ENCODE measurements at regions of chrX and their contacts with region 1.

Region 1: GRCh38 chrX:69503782-69504625 is at the start of gene NALF2:
- DNase-seq: peak in 1 of 2 experiments; percentile 72
- H3K4me3 ChIP-seq: peak within 1 kb of the TSS; percentile 63 to 94 (median 72)
- H3K27ac ChIP-seq: no peak within 1 kb of the TSS; the same call in 1 of the 2 replicates
- H3K4me1 ChIP-seq: peaks cover 0 to 14% (median 7%) of the 10 kb centered on the region in 4 experiments; a peak in 6 of 7 replicates
- H3K27me3 ChIP-seq: peaks cover 0 to 13% (median 5%) of the 10 kb centered on the region in 4 experiments; a peak in 6 of 7 replicates
- CTCF ChIP-seq: no peak
- EP300 ChIP-seq: no peak
- POLR2A ChIP-seq: no peak; a peak in 1 of 3 replicates
- RAD21 ChIP-seq: no peak
- total RNA-seq, gene NALF2: 15.6 and 16.1 TPM in 2 replicates

Region 2: GRCh38 chrX:69374569-69374968 is 129.4 kb before region 1 on chrX:
- CTCF ChIA-PET with region 1: no interaction called
- POLR2A ChIA-PET with region 1: no interaction called
- DNase-seq: no peak
- H3K4me3 ChIP-seq: no peak overlapping the region
- H3K27ac ChIP-seq: no peak overlapping the region
- H3K4me1 ChIP-seq: no peaks in the 10 kb centered on the region
- H3K27me3 ChIP-seq: no peaks in the 10 kb centered on the region
- CTCF ChIP-seq: no peak
- EP300 ChIP-seq: no peak
- POLR2A ChIP-seq: no peak
- RAD21 ChIP-seq: no peak

Region 3: GRCh38 chrX:69424161-69424560 is 79.8 kb before region 1 on chrX:
- CTCF ChIA-PET with region 1: no interaction called
- POLR2A ChIA-PET with region 1: no interaction called
- DNase-seq: no peak
- H3K4me3 ChIP-seq: no peak overlapping the region
- H3K27ac ChIP-seq: no peak overlapping the region
- H3K4me1 ChIP-seq: no peaks in the 10 kb centered on the region
- H3K27me3 ChIP-seq: no peaks in the 10 kb centered on the region
- CTCF ChIP-seq: peak in 2 of 3 experiments; percentile 11 to 24; a peak in 2 of 4 replicates
- EP300 ChIP-seq: no peak
- POLR2A ChIP-seq: no peak
- RAD21 ChIP-seq: peak; percentile 27 to 31; a peak in 3 of 4 replicates

Region 4: GRCh38 chrX:69493193-69493592 is 10.8 kb before region 1 on chrX:
- CTCF ChIA-PET with region 1: interaction called, 16 read pairs
- POLR2A ChIA-PET with region 1: no interaction called
- DNase-seq: peak in 1 of 2 experiments; percentile 72
- H3K4me3 ChIP-seq: no peak overlapping the region
- H3K27ac ChIP-seq: no peak overlapping the region
- H3K4me1 ChIP-seq: no peaks in the 10 kb centered on the region
- H3K27me3 ChIP-seq: no peaks in the 10 kb centered on the region
- CTCF ChIP-seq: peak in 2 of 3 experiments; percentile 51 to 54; a peak in 3 of 4 replicates
- EP300 ChIP-seq: no peak
- POLR2A ChIP-seq: no peak
- RAD21 ChIP-seq: peak; percentile 71 to 81